Body of pancreas (tissue), 4 donors: ENCODE measurements at regions of chr9 and their contacts with region 1.

Region 1: DNA sequence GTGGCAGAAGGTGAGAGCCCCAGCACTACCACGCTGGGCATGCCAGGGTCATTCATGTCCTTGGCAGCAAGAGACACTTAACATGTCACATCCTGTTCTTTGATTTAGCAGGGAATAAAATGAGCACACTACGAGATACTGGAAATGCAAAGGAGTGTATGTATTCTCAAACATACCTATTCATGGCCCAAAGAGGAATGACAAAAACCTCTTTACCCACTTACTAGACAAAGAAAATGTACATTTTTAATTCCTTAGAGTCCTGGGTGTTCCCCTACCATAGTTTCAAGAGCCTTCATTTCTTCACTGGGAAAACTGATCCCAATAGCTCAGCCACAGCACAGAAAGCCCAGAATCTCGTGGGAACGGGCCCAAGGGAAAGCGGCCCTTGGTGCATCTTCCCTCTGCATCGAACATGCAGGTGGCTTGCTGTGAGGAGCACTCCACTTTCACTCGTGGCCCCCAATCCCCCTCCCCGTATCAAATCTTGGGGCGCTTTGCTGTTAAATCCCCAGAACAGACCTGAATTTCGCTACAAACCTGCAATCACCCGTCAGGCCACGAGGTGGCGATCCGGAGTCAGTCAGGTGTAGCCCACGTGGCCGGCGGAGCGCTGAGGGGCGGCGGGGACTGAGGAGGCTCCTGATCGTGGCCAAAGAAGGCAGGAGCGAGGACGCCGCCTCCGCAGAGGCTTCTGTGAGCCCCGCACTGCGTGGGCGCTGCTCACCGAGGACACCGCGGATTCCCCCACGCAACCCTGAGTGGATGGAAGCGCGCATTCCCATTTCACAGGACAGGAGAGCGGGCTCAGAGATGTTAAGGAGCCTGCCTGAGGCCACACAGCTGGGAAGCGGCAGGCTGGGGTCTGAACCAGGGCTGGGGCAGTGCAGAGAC is 91.4 kb downstream of the LMX1B start:
- DNase-seq: peak; percentile 77 to 82 (median 81)
- ATAC-seq: peak; percentile 73
- H3K4me3 ChIP-seq: no peak overlapping the region
- H3K27ac ChIP-seq: no peak overlapping the region
- H3K4me1 ChIP-seq: peaks cover 8% of the 10 kb centered on the region
- H3K27me3 ChIP-seq: peaks cover 0 to 32% of the 10 kb centered on the region in 2 donors
- CTCF ChIP-seq: peak; percentile 77 to 91 (median 88)
- POLR2A ChIP-seq: no peak

Region 2: GRCh38 chr9:126131066-126132010 is 573.8 kb before region 1 on chr9:
- intact Hi-C with region 1: no loop called
- DNase-seq: no peak
- ATAC-seq: no peak
- H3K4me3 ChIP-seq: no peak overlapping the region
- H3K27ac ChIP-seq: no peak overlapping the region
- H3K4me1 ChIP-seq: no peaks in the 10 kb centered on the region
- H3K27me3 ChIP-seq: no peaks in the 10 kb centered on the region
- CTCF ChIP-seq: no peak
- POLR2A ChIP-seq: no peak

Region 3: GRCh38 chr9:126781186-126782052 is 76.3 kb after region 1 on chr9:
- intact Hi-C with region 1: loop called (anchors 5 kb)
- DNase-seq: peak; percentile 83 to 89 (median 84)
- ATAC-seq: peak; percentile 83
- H3K4me3 ChIP-seq: no peak overlapping the region
- H3K27ac ChIP-seq: no peak overlapping the region
- H3K4me1 ChIP-seq: peaks cover 8% of the 10 kb centered on the region
- H3K27me3 ChIP-seq: no peaks in the 10 kb centered on the region
- CTCF ChIP-seq: peak; percentile 86 to 94 (median 88)
- POLR2A ChIP-seq: no peak

Region 4: DNA sequence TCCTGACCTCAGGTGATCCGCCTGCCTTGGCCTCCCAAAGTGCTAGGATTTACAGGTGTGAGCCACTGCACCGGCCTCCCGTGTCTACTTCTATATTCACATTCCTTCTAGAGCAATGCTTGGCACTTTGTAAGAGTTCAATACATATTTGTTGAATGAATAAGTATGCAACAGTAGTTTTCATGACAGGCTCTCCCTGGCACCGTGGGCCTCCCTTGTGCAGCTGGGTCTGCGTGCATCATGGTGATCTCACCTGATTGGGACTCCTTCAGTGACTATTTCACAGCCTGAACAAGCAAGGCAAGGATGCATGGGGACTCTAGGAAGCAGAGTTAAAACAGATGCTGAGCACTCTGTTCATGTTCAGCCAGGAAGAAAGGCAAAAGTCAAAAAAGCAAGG is 148.5 kb after region 1 on chr9:
- intact Hi-C with region 1: no loop called
- DNase-seq: no peak
- ATAC-seq: no peak
- H3K4me3 ChIP-seq: no peak overlapping the region
- H3K27ac ChIP-seq: no peak overlapping the region
- H3K4me1 ChIP-seq: peaks cover 14% of the 10 kb centered on the region
- H3K27me3 ChIP-seq: no peaks in the 10 kb centered on the region
- CTCF ChIP-seq: no peak
- POLR2A ChIP-seq: no peak